Activated CD4-positive, alpha-beta T cell treated with anti-CD3 and anti-CD28 coated beads for 36 hours (primary cell): ENCODE measurements at regions of chr9 and their contacts with region 1.

Region 1: DNA sequence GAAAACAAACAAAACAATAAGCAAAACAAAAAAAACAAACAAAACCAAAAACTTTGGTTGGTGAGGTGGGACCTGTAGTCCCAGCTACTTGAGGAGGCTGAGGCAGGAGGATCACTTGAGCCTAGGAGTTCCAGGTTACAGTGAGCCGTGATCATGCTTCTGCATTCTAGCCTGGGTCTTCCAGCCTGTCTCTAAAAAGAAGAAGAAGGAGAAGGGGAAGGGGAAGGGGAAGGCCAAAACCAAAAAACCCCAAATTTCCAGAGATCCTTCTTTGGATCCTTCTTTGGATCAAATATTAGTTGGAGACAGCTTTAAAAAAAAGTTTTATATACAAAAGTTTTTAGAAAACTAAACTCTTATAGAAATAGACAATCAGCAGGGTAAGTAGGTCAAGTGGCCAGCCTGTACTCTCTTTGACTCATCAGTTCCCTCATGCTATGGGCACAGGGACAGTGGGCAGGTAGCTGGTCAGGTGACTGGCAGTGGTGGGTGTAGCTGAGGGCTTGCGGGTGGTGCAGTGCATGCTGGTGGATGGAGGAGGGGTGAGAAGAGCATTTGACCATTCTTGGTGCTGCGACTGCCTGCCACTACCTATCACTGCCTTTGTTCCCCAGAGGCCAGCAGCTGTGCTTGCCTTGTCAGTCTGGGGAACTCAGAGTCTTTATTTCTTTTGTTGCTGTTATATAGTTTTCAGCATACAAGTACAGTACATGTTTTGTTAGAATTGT is 12.6 kb downstream of the RCL1 start:
- DNase-seq: no peak
- ATAC-seq: no peak
- H3K4me3 Mint-ChIP-seq: no peak overlapping the region
- H3K27ac Mint-ChIP-seq: no peak overlapping the region
- H3K4me1 Mint-ChIP-seq: peaks cover 15% of the 10 kb centered on the region
- H3K27me3 Mint-ChIP-seq: no peaks in the 10 kb centered on the region

Region 2: DNA sequence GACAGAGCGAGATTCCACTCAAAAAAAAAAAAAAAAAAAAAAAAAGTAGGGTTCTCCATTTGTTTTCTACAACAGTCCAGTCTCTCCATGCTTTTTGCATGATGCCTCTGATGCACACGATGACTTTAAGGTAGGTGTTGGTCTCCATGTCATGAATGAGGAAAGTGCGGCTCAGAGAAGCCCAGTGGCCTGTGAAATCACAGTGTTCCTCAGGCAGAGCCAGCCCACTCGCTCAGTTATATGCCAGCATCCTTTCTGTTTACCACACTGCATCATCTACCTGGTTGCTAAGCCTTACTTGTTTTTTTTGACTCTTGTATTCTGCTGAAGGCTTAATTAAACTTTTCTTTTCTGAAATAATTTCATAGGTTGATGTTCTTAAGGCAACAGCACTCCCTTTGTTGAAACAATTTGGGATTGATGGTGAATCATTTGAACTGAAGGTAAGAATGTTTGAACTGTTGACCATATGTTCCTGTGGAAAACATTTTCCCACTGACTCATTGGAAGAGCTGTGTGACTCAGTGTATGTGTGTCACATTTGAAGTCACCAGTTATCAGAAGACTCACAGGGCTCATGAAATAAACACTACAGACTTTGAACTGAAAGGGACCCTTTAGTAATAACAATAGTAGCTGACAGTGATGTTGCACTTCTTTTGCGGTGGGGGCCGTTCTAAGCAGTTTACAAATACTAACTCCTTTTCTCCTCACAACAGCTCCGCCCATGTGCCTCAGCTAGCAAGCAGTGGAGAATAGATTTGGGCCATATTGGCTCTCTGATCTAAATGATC is 27.6 kb after region 1 on chr9:
- CTCF ChIA-PET with region 1: no interaction called
- POLR2A ChIA-PET with region 1: no interaction called
- intact Hi-C with region 1: no loop called
- DNase-seq: peak; percentile 81
- ATAC-seq: peak; percentile 94
- H3K4me3 Mint-ChIP-seq: peak overlapping the region; percentile 16
- H3K27ac Mint-ChIP-seq: peak overlapping the region; percentile 84
- H3K4me1 Mint-ChIP-seq: peaks cover 45% of the 10 kb centered on the region
- H3K27me3 Mint-ChIP-seq: no peaks in the 10 kb centered on the region

Region 3: DNA sequence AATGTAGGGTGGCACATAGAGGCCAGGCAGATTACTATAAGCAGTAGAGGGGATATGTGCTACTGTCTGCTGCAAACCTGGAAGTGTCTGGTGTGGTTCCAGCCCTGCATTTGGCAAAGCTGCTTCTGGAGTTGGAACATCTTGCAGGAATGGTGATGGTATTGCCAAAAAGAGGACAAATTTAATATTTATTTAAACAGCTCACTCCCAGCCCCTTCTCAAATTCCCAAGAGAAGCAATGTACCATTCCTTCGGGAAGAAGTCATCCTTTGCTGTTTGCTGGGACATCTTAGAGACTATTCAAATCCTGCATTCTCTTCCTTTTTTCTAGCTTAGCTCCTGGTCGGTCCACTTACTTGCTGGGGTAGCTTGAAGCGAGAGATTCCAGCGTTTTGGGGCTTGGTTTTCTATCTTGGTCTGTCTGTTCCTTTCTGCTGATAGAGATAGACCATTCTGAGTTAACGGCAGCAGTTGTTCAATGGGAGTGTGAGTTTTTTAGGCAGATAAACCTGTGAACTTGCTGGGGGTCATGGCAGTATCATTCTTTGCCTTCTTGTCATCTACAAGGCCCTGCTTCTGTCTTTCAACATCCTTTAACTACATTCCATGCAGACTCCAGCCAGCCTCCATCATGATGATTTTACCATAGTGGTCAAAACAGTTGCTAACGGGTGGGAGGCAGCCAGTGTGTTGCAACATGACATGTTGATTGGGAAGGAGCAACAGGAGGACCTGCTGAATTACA is 57.3 kb after region 1 on chr9:
- CTCF ChIA-PET with region 1: no interaction called
- POLR2A ChIA-PET with region 1: no interaction called
- intact Hi-C with region 1: loop called in 1 of 2 experiments (anchors 10 kb)
- DNase-seq: no peak
- ATAC-seq: no peak
- H3K4me3 Mint-ChIP-seq: no peak overlapping the region
- H3K27ac Mint-ChIP-seq: no peak overlapping the region
- H3K4me1 Mint-ChIP-seq: peaks cover 20% of the 10 kb centered on the region
- H3K27me3 Mint-ChIP-seq: no peaks in the 10 kb centered on the region